WTC11 (cell line): ENCODE measurements at regions of chr10 and their contacts with region 1.

Region 1: GRCh38 chr10:103192451-103193106 is 493 bp downstream of the NT5C2 start:
- DNase-seq: peak; percentile 68
- ATAC-seq: peak; percentile 58
- H3K4me3 Mint-ChIP-seq: peak overlapping the region; percentile 85
- H3K27ac Mint-ChIP-seq: peak overlapping the region; percentile 95
- H3K4me1 Mint-ChIP-seq: peaks cover 48% of the 10 kb centered on the region
- H3K27me3 Mint-ChIP-seq: peaks cover 13% of the 10 kb centered on the region
- CTCF ChIP-seq: no peak

Region 2: GRCh38 chr10:103231047-103231551 is 38.5 kb after region 1 on chr10:
- CTCF ChIA-PET with region 1: interaction called, 9 read pairs
- POLR2A ChIA-PET with region 1: interaction called, 21 read pairs
- DNase-seq: peak; percentile 51
- ATAC-seq: peak; percentile 90
- H3K4me3 Mint-ChIP-seq: no peak overlapping the region
- H3K27ac Mint-ChIP-seq: peak overlapping the region; percentile 96
- H3K4me1 Mint-ChIP-seq: peaks cover 36% of the 10 kb centered on the region
- H3K27me3 Mint-ChIP-seq: no peaks in the 10 kb centered on the region
- CTCF ChIP-seq: no peak

Region 3: GRCh38 chr10:103238506-103239252 is 46.1 kb after region 1 on chr10:
- CTCF ChIA-PET with region 1: interaction called, 25 read pairs
- POLR2A ChIA-PET with region 1: interaction called, 11 read pairs
- DNase-seq: peak; percentile 52
- ATAC-seq: peak; percentile 95
- H3K4me3 Mint-ChIP-seq: no peak overlapping the region
- H3K27ac Mint-ChIP-seq: peak overlapping the region; percentile 87
- H3K4me1 Mint-ChIP-seq: peaks cover 33% of the 10 kb centered on the region
- H3K27me3 Mint-ChIP-seq: no peaks in the 10 kb centered on the region
- CTCF ChIP-seq: no peak